ENCODE measurements at regions of chr12 and their contacts with region 1.

Region 1: GRCh38 chr12:4857472-4858291 is 52.0 kb upstream of the KCNA1 start:
- H3K4me3 ChIP-seq: peak overlapping the region; percentile 19; the same call in 1 of the 2 replicates
- H3K27ac ChIP-seq: no peak overlapping the region
- H3K4me1 ChIP-seq: no peaks in the 10 kb centered on the region; the same call in 1 of the 2 replicates
- CTCF ChIP-seq: peak; percentile 70; the same call in 1 of the 2 replicates

Region 2: DNA sequence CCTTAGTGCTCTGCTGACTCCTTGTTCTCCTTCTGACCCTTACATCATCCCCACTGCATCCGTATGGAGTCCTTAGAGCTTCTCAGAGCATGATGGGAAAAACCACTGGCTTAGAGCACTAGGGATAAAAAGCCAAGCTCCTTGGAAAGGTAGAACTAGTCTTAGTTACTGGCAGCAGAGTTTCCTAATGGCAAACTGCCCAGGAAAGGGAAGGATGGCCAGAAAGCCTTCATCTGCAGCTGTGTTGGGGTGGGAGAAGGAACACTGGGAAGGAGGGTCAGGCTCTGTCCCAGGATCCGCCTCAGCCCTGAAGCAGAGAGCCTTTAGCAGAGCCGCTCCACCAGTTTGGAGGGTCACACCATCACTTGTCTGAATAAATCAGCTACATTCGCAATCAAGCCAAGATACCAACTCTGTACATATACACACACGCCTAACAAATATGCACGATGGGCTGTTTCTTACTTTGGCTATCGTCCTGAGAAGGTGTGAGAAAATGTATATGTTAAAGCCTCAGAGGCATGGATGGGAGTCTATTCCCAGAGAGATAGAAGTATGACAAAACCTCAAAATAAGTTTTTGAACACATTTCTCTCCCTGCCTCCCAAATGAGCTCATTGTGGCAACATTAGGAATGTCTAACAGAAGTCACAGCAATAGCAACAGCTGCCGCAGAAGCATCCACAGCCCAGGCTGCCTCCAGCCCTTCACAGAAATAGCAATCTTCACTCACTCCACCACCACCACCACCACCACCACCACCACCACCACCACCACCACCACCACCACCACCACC is 156.1 kb before region 1 on chr12:
- CTCF ChIA-PET with region 1: no interaction called
- POLR2A ChIA-PET with region 1: no interaction called
- H3K4me3 ChIP-seq: no peak overlapping the region
- H3K27ac ChIP-seq: no peak overlapping the region
- H3K4me1 ChIP-seq: no peaks in the 10 kb centered on the region
- CTCF ChIP-seq: no peak

Region 3: GRCh38 chr12:4908684-4909409 is 51.2 kb after region 1 on chr12:
- CTCF ChIA-PET with region 1: interaction called, 34 read pairs
- POLR2A ChIA-PET with region 1: no interaction called
- H3K4me3 ChIP-seq: peak overlapping the region; percentile 38
- H3K27ac ChIP-seq: no peak overlapping the region
- H3K4me1 ChIP-seq: peaks cover 5% of the 10 kb centered on the region; the same call in 1 of the 2 replicates
- CTCF ChIP-seq: peak; percentile 91

Region 4: DNA sequence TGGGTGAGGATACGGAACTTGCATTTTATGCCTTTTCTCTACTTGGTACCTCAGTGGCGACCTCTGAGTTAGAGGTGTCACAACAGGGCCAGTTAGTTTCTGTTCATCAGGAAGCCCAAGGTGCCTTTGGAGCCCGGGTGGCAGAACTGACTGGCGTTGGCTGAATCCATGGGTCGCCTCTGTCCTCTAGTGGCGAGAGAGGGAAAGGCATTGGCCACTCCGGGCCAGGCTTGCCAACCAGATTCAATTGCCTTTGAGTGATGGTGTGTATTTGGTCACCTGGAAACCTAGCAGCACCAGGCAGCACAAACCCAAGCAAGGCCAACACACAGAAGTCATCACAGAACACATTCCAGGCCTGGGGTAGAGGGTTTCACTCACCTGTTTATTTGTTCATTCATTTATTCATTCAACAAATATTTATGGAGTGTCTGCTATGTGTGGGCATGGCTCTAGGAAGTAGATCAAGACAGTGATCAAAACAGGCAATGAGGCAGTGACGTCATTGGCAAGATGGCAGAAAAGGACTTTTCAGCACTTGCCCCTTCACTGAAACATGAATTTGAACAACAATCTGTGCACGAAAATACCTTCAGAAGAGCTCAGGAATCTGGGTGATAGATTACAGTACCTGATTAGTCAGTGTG is 145.5 kb after region 1 on chr12:
- CTCF ChIA-PET with region 1: interaction called, 185 read pairs
- POLR2A ChIA-PET with region 1: interaction called, 3 read pairs
- H3K4me3 ChIP-seq: no peak overlapping the region
- H3K27ac ChIP-seq: no peak overlapping the region
- H3K4me1 ChIP-seq: no peaks in the 10 kb centered on the region
- CTCF ChIP-seq: peak; percentile 85

Region 5: DNA sequence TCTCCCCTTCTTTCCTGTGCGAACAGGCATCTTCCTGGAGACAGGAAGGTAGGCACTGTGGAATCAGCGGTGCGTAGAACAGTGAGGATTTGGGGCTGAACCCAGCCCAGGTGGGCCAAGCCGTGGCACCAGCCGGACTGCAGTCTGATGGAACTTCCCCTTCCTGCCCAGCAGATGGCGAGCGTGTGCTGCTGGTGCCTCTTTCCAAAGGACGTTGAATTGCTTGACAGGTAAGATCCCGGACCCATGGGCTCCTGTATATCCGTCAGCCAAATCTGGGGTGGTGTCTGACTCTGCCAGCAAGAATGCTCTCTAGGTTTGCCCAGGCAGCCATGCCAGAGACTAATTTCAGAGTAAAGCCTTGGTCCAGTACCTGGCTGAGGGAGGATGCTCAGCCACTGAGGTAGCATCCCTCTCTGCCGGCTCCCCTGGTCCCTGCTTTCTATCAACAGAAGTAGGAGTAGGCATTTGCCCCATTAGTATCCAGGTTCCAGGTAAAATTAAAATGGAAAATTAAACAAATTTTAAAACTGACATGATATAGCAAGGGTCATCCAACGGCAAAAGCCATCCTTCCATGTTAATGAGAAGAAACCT is 164.9 kb after region 1 on chr12:
- CTCF ChIA-PET with region 1: interaction called, 43 read pairs
- POLR2A ChIA-PET with region 1: no interaction called
- H3K4me3 ChIP-seq: no peak overlapping the region
- H3K27ac ChIP-seq: no peak overlapping the region
- H3K4me1 ChIP-seq: no peaks in the 10 kb centered on the region
- CTCF ChIP-seq: peak; percentile 82

Region 6: DNA sequence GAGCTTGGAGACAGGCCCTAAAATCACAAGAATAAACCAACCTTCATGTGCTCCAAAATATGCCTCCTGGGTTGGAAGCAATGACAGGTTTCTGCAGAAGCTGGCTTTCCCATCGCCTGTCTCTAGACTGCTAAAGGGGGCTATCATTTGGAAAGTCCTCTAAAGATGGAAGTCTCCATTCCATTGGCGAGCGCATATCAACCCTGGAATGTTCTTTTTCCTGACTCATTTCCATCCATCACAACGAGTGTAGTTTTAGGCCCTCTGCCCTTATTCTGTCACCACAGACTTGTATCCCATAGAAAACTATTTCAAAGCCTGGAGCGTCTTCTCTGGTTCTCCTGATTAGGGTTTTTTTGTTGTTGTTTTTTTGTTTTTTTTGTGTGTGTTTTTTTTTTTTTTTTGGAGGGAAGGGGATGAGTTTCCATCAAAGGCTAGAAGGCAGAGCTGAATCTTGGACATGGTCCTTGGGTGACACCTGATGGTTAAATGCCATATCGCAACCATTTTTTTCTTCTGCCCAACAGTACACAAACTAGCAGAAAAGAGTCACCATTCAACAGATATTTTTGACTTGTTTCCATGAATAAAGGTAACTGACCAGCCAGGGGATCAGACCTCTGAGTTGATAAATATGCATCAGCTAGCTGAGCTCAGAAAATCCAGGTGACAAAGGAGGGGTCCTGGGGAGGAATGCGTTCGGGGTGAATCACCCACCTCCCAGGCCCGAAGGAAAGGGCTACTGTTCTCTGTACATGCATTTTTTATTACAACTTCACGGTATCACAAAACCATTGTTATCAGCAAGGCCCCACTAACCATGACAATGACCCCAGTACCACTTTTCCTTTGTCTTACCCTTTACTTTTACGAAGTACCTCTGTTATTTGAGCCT is 226.5 kb after region 1 on chr12:
- CTCF ChIA-PET with region 1: interaction called, 67 read pairs
- POLR2A ChIA-PET with region 1: no interaction called
- H3K4me3 ChIP-seq: no peak overlapping the region
- H3K27ac ChIP-seq: no peak overlapping the region
- H3K4me1 ChIP-seq: no peaks in the 10 kb centered on the region
- CTCF ChIP-seq: peak; percentile 54; the same call in 1 of the 2 replicates

Measured in HEK293 (cell line).